HepG2 (cell line): ENCODE measurements at regions of chr22 and their contacts with region 1.

Region 1: GRCh38 chr22:28009272-28009827 is 90.3 kb upstream of the PITPNB start:
- DNase-seq: peak; percentile 34
- ATAC-seq: peak; percentile 91
- H3K4me3 ChIP-seq: no peak overlapping the region
- H3K27ac ChIP-seq: no peak overlapping the region
- H3K4me1 ChIP-seq: no peaks in the 10 kb centered on the region
- H3K27me3 ChIP-seq: no peaks in the 10 kb centered on the region
- CTCF ChIP-seq: peak; percentile 96
- EP300 ChIP-seq: no peak
- POLR2A ChIP-seq: no peak
- RAD21 ChIP-seq: peak; percentile 83

Region 2: DNA sequence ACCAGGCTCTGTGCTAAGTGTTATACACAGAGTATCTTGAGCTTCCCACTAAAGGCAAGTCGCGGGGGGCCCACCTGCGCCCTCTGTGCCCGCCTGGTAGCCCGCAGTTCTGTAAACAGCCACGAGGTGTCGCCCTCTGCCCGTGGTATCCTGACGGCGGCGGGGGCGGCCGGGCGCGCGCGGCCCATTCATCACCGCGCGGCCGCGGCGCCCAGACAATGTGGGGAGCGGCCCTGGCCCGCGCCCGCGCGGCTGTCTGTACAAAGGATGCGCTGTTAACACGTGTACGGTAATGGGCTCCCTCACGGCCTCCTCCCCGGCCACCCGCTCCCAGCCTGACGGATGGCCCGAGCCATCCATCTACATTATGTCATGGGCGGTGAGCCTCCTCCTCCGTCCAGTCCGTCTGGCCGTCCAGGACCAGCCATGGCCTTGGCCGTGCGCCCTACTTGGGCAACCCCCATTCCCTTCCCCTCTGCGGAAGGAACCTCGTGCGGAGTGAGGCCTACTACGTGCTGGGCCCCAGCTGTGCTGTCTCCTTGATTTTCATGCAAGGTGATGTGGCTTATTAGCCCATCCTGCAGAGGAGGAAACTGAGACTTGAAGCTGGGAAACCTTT is 1252.6 kb before region 1 on chr22:
- CTCF ChIA-PET with region 1: interaction called, 7 read pairs
- POLR2A ChIA-PET with region 1: no interaction called
- in situ Hi-C with region 1: loop called (anchors 25 kb)
- intact Hi-C with region 1: no loop called
- DNase-seq: no peak
- ATAC-seq: peak; percentile 81
- H3K4me3 ChIP-seq: no peak overlapping the region; a peak in 1 of 6 replicates
- H3K27ac ChIP-seq: no peak overlapping the region
- H3K4me1 ChIP-seq: no peaks in the 10 kb centered on the region
- H3K27me3 ChIP-seq: no peaks in the 10 kb centered on the region
- CTCF ChIP-seq: peak; percentile 80
- EP300 ChIP-seq: no peak
- POLR2A ChIP-seq: no peak
- RAD21 ChIP-seq: peak; percentile 90

Region 3: GRCh38 chr22:26822299-26822698 is 1187.1 kb before region 1 on chr22:
- CTCF ChIA-PET with region 1: no interaction called
- POLR2A ChIA-PET with region 1: no interaction called
- in situ Hi-C with region 1: no loop called
- intact Hi-C with region 1: no loop called
- DNase-seq: no peak
- ATAC-seq: no peak
- H3K4me3 ChIP-seq: no peak overlapping the region
- H3K27ac ChIP-seq: no peak overlapping the region
- H3K4me1 ChIP-seq: no peaks in the 10 kb centered on the region
- H3K27me3 ChIP-seq: no peaks in the 10 kb centered on the region; a peak in 1 of 5 replicates
- CTCF ChIP-seq: 0 out of 2 replicates have a peak, but pooled peaks have one; percentile 6
- EP300 ChIP-seq: no peak
- POLR2A ChIP-seq: no peak
- RAD21 ChIP-seq: no peak

Region 4: DNA sequence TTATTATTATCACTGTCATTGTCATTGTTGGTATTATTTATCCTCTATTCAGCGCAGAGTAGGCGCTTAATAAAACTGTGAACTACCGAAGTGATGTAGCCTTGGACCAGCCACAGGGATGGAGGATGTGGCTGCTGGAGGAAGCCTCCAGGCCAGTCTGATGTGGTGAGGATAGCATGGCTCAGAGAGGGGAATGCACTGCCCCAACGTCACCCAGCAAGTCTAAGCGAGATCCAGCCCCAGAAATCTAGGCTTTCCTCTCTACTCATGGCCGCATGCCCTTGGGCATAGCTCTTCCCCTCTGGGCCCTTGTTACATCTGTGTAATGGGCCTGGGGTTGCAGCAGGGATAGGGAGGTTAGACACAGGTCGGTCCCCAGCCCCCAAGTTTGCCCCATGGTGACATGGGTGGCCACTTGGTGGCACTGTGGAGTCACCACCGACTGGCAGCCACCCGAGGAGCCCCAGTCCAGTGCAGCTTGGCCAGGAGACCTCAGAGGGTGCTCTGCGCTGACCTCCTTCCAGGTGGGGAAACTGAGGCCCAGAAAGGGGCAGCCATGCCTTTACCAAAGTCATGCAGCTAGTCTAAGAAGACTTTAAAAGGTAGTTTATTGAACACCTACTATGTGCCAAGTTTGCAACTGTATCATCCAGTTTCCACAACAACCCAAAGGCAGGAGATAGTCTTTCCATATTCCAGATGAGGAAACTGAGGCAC is 603.5 kb before region 1 on chr22:
- CTCF ChIA-PET with region 1: no interaction called
- POLR2A ChIA-PET with region 1: no interaction called
- in situ Hi-C with region 1: loop called (anchors 25 kb)
- intact Hi-C with region 1: no loop called
- DNase-seq: peak; percentile 16
- ATAC-seq: peak; percentile 94
- H3K4me3 ChIP-seq: no peak overlapping the region
- H3K27ac ChIP-seq: no peak overlapping the region
- H3K4me1 ChIP-seq: no peaks in the 10 kb centered on the region
- H3K27me3 ChIP-seq: peaks cover 0 to 5% of the 10 kb centered on the region in 2 experiments; a peak in 2 of 5 replicates
- CTCF ChIP-seq: peak; percentile 86
- EP300 ChIP-seq: no peak
- POLR2A ChIP-seq: no peak
- RAD21 ChIP-seq: peak; percentile 86

Region 5: DNA sequence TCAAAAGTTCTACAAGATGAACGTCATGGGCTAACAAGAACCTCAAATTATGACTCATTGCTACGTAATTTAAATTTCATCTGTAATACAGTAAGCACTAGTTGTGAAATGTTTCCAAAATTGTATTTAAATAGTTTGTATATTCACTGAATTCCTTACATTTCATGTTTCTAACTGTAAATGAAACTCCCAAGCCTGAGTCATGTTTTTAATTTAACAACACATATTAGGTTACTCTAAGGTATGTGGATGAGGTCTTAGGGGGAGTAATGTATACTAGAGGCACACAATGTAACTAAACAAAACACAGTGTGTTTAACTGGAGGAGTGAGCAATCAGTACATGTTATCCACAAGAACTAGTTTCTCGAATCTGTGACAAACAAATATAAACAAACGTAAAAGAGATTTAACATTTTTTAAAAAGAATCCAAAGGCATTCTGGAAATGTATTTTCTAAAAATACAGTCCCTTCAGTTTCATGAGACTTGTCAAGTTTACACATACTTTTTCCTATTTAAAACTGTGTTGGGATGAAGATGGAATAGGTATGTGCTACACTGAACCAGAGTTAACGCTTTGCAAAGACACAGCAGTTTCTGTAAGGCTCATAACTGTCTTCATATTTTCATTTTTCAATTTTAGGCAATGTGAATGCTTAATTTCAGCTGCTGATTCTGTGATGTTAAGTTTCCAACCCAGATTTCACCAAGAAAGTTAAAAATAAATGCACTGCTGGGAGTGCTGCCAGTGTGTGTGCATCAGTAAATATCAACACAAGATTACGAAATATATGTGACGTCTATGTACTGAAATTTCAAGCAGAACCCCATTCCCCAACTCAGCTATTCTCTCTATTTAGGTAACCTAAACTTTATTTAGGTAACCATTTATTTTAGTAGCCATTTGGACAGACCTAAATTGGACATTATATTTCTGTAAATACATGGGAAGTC is 142.9 kb before region 1 on chr22:
- CTCF ChIA-PET with region 1: no interaction called
- POLR2A ChIA-PET with region 1: no interaction called
- in situ Hi-C with region 1: no loop called
- intact Hi-C with region 1: no loop called
- DNase-seq: peak; percentile 43
- ATAC-seq: no peak
- H3K4me3 ChIP-seq: no peak overlapping the region
- H3K27ac ChIP-seq: peak overlapping the region; percentile 9
- H3K4me1 ChIP-seq: peaks cover 84% of the 10 kb centered on the region
- H3K27me3 ChIP-seq: no peaks in the 10 kb centered on the region
- CTCF ChIP-seq: no peak
- EP300 ChIP-seq: peak in 1 of 2 experiments; percentile 26; a peak in 1 of 4 replicates
- POLR2A ChIP-seq: no peak
- RAD21 ChIP-seq: no peak

Region 6: DNA sequence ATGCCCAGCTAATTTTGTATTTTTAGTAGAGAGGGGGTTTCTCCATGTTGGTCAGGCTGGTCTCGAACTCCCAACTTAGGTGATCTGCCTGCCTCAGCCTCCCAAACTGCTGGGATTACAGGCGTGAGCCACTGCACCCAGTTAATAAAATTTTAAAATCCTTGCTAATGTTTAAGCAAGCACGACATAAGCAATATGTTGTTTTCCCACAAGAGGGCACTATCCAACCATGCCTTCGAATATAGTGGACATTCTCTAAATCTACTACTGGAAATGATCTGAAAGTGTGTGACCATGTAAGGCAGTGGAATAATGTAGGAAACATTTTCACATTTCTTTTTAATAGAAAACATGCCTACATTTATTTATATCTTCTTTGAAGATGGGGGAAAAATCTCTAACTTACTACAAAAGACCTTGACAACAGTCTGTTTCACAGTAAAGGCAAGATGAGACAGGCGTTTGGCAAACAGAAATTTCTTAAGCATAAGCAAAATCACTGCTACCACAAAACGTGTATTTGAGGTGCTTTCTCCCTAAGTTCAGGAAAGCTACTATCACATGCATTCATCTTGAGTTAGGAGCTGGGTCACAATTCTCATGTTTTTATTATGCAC is 128.5 kb before region 1 on chr22:
- CTCF ChIA-PET with region 1: interaction called, 27 read pairs
- POLR2A ChIA-PET with region 1: no interaction called
- in situ Hi-C with region 1: loop called (anchors 5 kb)
- intact Hi-C with region 1: loop called (anchors 1 kb)
- DNase-seq: peak; percentile 56
- ATAC-seq: peak; percentile 77
- H3K4me3 ChIP-seq: no peak overlapping the region
- H3K27ac ChIP-seq: no peak overlapping the region
- H3K4me1 ChIP-seq: peaks cover 40% of the 10 kb centered on the region
- H3K27me3 ChIP-seq: no peaks in the 10 kb centered on the region
- CTCF ChIP-seq: peak; percentile 78
- EP300 ChIP-seq: no peak
- POLR2A ChIP-seq: no peak
- RAD21 ChIP-seq: peak; percentile 64; the same call in 1 of the 2 replicates

Region 7: GRCh38 chr22:27885977-27886842 is 123.1 kb before region 1 on chr22:
- CTCF ChIA-PET with region 1: interaction called, 27 read pairs
- POLR2A ChIA-PET with region 1: no interaction called
- in situ Hi-C with region 1: loop called (anchors 5 kb)
- intact Hi-C with region 1: loop called (anchors 1 kb)
- DNase-seq: peak; percentile 35
- ATAC-seq: peak; percentile 41; the same call in 1 of the 3 replicates
- H3K4me3 ChIP-seq: no peak overlapping the region
- H3K27ac ChIP-seq: no peak overlapping the region
- H3K4me1 ChIP-seq: peaks cover 32% of the 10 kb centered on the region
- H3K27me3 ChIP-seq: no peaks in the 10 kb centered on the region
- CTCF ChIP-seq: peak; percentile 54
- EP300 ChIP-seq: no peak
- POLR2A ChIP-seq: no peak
- RAD21 ChIP-seq: no peak